H1 (cell line): ENCODE measurements at regions of chr3 and their contacts with region 1.

Region 1: DNA sequence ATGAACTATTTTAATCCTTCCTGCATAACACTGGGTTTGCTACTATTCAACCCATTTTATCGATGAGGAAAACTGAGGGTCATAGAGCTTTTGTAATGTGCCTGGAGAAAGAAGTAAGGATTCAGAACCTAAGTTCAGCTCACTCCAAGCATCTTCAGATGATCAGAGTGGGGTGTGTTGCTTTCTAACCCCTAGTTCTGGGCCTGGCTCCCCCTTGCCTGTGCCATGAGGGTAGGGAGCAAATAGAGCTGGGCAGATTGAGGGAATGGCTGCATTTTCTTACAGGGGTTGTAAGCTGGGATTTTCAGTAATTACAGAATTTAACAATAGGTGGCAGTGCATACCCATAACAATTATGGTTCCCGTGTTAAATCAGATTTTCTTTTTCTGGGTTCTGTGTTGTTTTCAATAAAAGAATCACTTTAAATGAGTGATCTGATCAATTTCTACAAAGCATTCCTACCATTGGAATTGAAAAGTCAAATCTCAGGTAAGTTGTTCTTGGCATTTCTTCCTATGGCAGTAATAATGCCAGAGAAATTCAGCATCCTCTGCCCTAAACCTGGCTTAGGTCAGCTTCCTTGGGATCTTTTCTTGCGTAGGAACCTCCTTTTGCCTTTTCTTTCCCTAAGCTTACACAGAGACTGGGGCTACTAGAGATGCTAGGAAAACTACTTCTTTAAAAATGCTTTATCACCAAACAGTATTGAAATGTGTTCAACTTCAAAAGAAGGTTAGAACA is 103.8 kb upstream of the IL12A start:
- DNase-seq: no peak
- H3K4me3 ChIP-seq: no peak overlapping the region
- H3K27ac ChIP-seq: no peak overlapping the region
- H3K4me1 ChIP-seq: peaks cover 0 to 6% (median 1%) of the 10 kb centered on the region in 4 experiments; a peak in 3 of 7 replicates
- H3K27me3 ChIP-seq: no peaks in the 10 kb centered on the region
- CTCF ChIP-seq: peak in 2 of 3 experiments; percentile 44 to 52; a peak in 2 of 4 replicates
- EP300 ChIP-seq: no peak
- POLR2A ChIP-seq: no peak
- RAD21 ChIP-seq: peak; percentile 57 to 59

Region 2: DNA sequence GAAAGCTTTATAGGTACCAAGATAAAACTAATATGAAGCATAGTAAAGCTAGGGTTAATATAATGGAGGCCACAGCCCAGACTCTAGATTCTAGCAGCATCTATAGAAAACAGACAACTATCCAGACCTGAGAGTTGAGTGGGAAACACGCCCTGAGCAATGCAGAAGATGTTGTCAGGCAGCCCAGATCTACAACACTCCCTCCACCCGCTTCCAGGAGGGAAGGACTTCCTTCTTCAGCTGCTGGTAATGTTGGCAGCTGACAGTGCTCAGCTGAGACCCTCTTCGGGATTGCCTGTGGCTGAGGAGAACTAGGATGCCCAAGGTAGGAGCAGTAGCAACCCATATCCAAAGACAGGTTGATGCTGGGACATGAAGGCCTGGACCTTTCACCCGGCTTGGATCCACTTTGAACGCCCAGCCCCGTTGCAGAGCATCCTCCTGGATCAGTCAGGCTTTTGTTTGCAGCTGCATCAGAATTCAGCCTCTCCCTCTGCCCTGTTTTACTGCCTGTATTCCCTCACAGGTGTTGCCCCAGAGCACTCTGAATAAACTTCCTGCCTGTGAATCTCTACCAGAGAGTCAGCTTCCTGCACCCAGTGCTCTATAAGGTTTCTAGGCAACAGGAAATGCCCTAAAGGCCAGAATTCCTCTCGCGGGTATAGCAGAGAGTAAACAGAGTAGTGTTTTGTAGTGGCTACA is 70.9 kb before region 1 on chr3:
- CTCF ChIA-PET with region 1: interaction called, 32 read pairs
- POLR2A ChIA-PET with region 1: no interaction called
- DNase-seq: peak in 1 of 2 experiments; percentile 31
- H3K4me3 ChIP-seq: no peak overlapping the region
- H3K27ac ChIP-seq: no peak overlapping the region
- H3K4me1 ChIP-seq: peaks cover 2 to 6% (median 3%) of the 10 kb centered on the region in 4 experiments; a peak in 5 of 7 replicates
- H3K27me3 ChIP-seq: no peaks in the 10 kb centered on the region
- CTCF ChIP-seq: no peak
- EP300 ChIP-seq: no peak
- POLR2A ChIP-seq: no peak
- RAD21 ChIP-seq: no peak

Region 3: GRCh38 chr3:159897331-159898075 is 12.7 kb after region 1 on chr3:
- CTCF ChIA-PET with region 1: interaction called, 29 read pairs
- POLR2A ChIA-PET with region 1: interaction called, 3 read pairs
- DNase-seq: no peak
- H3K4me3 ChIP-seq: no peak overlapping the region
- H3K27ac ChIP-seq: no peak overlapping the region
- H3K4me1 ChIP-seq: no peaks in the 10 kb centered on the region; a peak in 1 of 7 replicates
- H3K27me3 ChIP-seq: no peaks in the 10 kb centered on the region
- CTCF ChIP-seq: no peak
- EP300 ChIP-seq: no peak
- POLR2A ChIP-seq: no peak
- RAD21 ChIP-seq: no peak

Region 4: GRCh38 chr3:159936541-159936940 is 51.7 kb after region 1 on chr3:
- CTCF ChIA-PET with region 1: interaction called, 10 read pairs
- POLR2A ChIA-PET with region 1: no interaction called
- DNase-seq: no peak
- H3K4me3 ChIP-seq: no peak overlapping the region
- H3K27ac ChIP-seq: no peak overlapping the region
- H3K4me1 ChIP-seq: no peaks in the 10 kb centered on the region
- H3K27me3 ChIP-seq: no peaks in the 10 kb centered on the region
- CTCF ChIP-seq: no peak
- EP300 ChIP-seq: no peak
- POLR2A ChIP-seq: no peak
- RAD21 ChIP-seq: no peak

Region 5: DNA sequence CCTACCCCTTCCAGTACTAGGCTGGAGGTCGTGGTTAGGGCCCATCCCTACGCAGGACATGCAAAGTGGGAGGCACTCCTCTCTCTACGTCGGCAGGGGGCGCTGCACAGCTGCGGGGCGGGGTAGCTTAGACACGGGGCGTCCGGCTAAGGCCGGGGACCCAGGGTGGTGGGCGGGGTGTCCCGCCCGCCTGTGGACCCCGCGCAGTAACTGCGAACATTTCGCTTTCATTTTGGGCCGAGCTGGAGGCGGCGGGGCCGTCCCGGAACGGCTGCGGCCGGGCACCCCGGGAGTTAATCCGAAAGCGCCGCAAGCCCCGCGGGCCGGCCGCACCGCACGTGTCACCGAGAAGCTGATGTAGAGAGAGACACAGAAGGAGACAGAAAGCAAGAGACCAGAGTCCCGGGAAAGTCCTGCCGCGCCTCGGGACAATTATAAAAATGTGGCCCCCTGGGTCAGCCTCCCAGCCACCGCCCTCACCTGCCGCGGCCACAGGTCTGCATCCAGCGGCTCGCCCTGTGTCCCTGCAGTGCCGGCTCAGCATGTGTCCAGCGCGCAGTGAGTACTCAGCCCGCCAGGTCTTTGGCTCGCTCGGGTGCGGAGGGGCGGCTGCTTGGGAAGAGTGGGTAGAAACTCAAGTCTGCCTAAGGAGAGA is 103.9 kb after region 1 on chr3 and contains the start of gene IL12A:
- CTCF ChIA-PET with region 1: interaction called, 64 read pairs
- POLR2A ChIA-PET with region 1: no interaction called
- DNase-seq: peak; percentile 57 to 92
- H3K4me3 ChIP-seq: peak within 1 kb of the TSS; percentile 46 to 73 (median 56)
- H3K27ac ChIP-seq: no peak within 1 kb of the TSS
- H3K4me1 ChIP-seq: peaks cover 0 to 5% (median under 1%) of the 10 kb centered on the region in 4 experiments
- H3K27me3 ChIP-seq: peaks cover 0 to 3% (median 2%) of the 10 kb centered on the region in 4 experiments; a peak in 3 of 7 replicates
- CTCF ChIP-seq: peak; percentile 81 to 98 (median 88)
- EP300 ChIP-seq: no peak
- POLR2A ChIP-seq: no peak
- RAD21 ChIP-seq: peak; percentile 59 to 69
- total RNA-seq, gene IL12A: 0.41 and 0.82 TPM in 2 replicates

Region 6: GRCh38 chr3:160027541-160028195 is 142.8 kb after region 1 on chr3:
- CTCF ChIA-PET with region 1: interaction called, 13 read pairs
- POLR2A ChIA-PET with region 1: no interaction called
- DNase-seq: no peak
- H3K4me3 ChIP-seq: no peak overlapping the region
- H3K27ac ChIP-seq: no peak overlapping the region
- H3K4me1 ChIP-seq: no peaks in the 10 kb centered on the region
- H3K27me3 ChIP-seq: no peaks in the 10 kb centered on the region
- CTCF ChIP-seq: no peak
- EP300 ChIP-seq: no peak
- POLR2A ChIP-seq: no peak
- RAD21 ChIP-seq: no peak